ENCODE measurements at regions of chr11 and their contacts with region 1.

Region 1: DNA sequence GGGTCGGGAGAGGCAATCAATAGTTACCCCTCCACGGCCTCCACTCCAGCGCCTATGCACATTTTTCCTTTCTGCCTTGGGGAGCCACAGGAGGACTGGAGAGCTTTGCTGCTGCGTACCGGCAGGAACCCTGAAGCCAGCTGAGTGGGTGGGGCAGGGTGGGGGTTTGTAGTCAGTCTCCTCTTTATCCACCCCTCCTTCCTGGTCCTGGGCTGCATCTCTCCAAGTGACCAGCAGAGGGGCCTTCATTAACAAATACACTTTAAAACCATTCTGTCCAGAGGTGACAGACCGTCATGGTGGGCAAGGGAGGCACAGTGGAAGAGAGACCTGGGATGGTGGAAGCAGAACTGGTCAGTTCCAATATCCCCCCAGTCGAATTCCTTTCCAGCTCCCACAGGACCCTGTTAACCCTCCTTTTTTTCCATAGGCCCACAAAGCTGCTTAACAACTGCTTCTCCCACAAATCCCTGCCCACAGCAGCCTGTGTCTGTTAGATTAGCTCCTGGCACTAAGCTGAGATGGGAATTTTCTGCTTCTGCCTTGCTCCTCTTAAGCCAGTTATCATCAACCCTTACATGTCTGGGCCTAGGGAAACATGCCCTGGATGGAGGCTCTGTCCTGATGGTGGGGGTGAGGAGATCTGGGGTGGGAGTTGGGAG is 3.9 kb upstream of the ABCG4 start:
- DNase-seq: peak; percentile 84
- ATAC-seq: peak; percentile 83
- H3K4me3 Mint-ChIP-seq: no peak overlapping the region
- H3K27ac Mint-ChIP-seq: no peak overlapping the region
- H3K4me1 Mint-ChIP-seq: peaks cover 23% of the 10 kb centered on the region
- H3K27me3 Mint-ChIP-seq: peaks cover 43% of the 10 kb centered on the region
- CTCF ChIP-seq: peak; percentile 52

Region 2: DNA sequence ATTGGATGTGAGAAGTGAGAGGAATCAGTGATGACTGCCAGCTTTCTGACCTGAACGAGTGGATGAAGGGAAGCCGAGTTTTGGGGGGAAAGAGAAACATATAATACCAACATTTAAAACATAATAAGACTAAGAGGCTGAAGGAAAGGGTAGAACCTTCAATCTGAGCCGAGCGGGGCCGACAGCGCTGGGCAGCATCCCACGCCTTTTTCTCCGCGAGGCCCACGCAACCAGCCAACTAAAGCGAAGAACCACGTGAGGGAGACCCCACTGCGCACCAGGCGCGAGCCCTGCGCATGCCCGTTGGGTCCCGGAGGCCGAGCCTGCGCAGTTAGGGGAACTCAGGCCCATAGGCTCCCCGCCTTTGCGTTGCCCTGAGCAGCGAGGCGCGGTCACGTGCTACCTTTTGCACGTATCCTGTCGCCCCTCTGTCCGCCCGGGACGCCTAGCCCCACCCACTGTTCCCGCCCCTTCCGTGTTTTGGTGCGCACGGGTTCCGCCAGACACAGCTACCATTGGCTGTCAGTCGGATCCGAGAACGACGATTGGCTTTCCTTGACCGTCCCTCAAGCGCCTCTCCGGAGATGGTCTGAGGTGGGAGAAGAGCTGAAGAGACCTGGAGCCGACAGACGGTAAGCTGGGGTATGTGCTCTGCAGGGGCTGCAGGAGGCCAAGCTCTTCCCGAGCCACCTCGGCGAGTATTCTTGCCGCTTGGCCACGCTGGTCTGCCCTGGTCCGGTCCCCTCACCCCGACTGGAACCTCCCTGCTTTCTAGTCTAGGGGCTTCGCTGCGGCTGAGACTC is 23.7 kb before region 1 on chr11 and contains the start of gene HINFP:
- CTCF ChIA-PET with region 1: interaction called, 11 read pairs
- POLR2A ChIA-PET with region 1: interaction called, 4 read pairs
- DNase-seq: peak; percentile 100
- ATAC-seq: peak; percentile 97
- H3K4me3 Mint-ChIP-seq: peak within 1 kb of the TSS; percentile 97
- H3K27ac Mint-ChIP-seq: peak within 1 kb of the TSS; percentile 96
- H3K4me1 Mint-ChIP-seq: peaks cover 19% of the 10 kb centered on the region
- H3K27me3 Mint-ChIP-seq: no peaks in the 10 kb centered on the region; the same call in 1 of the 2 replicates
- CTCF ChIP-seq: no peak
- total RNA-seq, gene HINFP: 34.0 to 37.1 TPM (median 35.4 TPM) in 3 replicates

Region 3: DNA sequence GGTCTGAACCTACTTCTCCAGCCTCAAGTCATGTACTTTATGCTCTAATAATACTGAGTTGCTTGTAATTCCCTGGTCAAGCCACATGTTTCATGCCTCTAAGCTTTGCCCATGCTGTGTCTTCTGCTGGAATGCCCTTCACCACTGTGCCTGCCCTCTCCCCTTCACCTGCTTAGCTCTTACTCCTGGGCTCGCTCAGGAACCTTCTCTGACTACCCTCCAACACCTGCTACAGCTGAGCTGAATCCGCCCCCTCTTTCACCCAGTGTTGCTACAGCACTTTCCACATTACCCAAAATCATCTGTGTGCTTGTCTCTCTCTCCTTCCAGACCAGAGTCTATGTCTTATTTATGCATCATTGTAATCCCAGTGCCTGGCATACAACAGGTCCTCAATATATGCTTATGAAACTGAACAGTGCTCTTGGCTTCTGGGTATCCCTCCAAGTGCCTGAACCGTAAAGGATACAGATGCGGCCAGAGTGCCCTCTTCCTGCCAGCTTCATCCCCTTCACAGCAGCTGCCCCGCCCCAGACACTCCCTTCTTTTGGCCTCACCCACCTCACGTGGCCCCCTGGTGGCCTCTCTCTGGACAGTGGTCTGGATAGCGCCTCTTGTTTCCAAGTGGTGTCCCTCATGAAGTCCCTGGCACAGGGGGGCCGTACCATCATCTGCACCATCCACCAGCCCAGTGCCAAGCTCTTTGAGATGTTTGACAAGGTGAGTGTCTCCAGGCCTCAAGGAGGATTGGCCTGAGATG is 11.0 kb after region 1 on chr11:
- CTCF ChIA-PET with region 1: interaction called, 13 read pairs
- POLR2A ChIA-PET with region 1: no interaction called
- DNase-seq: peak; percentile 52
- ATAC-seq: peak; percentile 59
- H3K4me3 Mint-ChIP-seq: no peak overlapping the region
- H3K27ac Mint-ChIP-seq: no peak overlapping the region
- H3K4me1 Mint-ChIP-seq: peaks cover 12% of the 10 kb centered on the region
- H3K27me3 Mint-ChIP-seq: peaks cover 16% of the 10 kb centered on the region
- CTCF ChIP-seq: peak; percentile 41; the same call in 1 of the 2 replicates

Region 4: DNA sequence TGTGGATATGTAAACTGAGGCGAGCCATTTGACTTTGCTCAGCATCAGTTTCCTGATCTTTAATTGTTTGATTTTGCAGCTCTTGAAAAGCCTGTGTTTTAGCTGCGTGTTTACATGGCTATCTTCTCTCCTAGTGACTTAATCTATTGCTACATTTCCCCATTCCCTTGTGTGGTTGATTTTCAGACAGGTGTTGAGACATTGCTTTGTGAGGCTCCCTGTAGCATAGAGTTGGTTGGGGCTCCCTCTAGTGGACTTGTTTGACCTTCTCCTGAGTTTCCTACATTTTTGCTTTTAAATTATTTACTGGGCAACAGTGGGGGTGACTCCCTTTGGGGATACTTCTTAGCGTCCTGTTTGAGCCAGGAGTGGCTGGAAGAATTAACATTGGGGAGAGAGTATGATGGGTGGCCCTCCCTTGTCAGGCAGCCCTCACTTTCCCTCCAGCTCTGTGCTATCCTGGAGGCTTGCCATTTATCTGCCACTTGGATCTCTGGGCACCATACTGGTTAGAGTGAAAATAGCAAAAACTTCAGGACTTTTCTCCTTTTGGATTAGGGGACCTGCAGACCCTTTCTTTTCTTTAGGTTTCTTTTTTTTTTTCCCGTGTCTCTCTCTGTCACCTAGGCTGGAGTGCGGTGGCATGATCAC is 52.0 kb after region 1 on chr11:
- CTCF ChIA-PET with region 1: interaction called, 31 read pairs
- POLR2A ChIA-PET with region 1: no interaction called
- DNase-seq: peak; percentile 68
- ATAC-seq: peak; percentile 73
- H3K4me3 Mint-ChIP-seq: no peak overlapping the region
- H3K27ac Mint-ChIP-seq: no peak overlapping the region
- H3K4me1 Mint-ChIP-seq: peaks cover 28% of the 10 kb centered on the region
- H3K27me3 Mint-ChIP-seq: no peaks in the 10 kb centered on the region; the same call in 1 of the 2 replicates
- CTCF ChIP-seq: peak; percentile 54